ENCODE measurements at regions of chr11 and their contacts with region 1.

Region 1: GRCh38 chr11:61567286-61568061 is 13.4 kb downstream of the SYT7 start:
- DNase-seq: peak; percentile 90
- ATAC-seq: peak; percentile 86
- H3K4me3 Mint-ChIP-seq: peak overlapping the region; percentile 59
- H3K27ac Mint-ChIP-seq: no peak overlapping the region
- H3K4me1 Mint-ChIP-seq: peaks cover 28% of the 10 kb centered on the region
- H3K27me3 Mint-ChIP-seq: peaks cover 19% of the 10 kb centered on the region
- CTCF ChIP-seq: peak; percentile 99

Region 2: DNA sequence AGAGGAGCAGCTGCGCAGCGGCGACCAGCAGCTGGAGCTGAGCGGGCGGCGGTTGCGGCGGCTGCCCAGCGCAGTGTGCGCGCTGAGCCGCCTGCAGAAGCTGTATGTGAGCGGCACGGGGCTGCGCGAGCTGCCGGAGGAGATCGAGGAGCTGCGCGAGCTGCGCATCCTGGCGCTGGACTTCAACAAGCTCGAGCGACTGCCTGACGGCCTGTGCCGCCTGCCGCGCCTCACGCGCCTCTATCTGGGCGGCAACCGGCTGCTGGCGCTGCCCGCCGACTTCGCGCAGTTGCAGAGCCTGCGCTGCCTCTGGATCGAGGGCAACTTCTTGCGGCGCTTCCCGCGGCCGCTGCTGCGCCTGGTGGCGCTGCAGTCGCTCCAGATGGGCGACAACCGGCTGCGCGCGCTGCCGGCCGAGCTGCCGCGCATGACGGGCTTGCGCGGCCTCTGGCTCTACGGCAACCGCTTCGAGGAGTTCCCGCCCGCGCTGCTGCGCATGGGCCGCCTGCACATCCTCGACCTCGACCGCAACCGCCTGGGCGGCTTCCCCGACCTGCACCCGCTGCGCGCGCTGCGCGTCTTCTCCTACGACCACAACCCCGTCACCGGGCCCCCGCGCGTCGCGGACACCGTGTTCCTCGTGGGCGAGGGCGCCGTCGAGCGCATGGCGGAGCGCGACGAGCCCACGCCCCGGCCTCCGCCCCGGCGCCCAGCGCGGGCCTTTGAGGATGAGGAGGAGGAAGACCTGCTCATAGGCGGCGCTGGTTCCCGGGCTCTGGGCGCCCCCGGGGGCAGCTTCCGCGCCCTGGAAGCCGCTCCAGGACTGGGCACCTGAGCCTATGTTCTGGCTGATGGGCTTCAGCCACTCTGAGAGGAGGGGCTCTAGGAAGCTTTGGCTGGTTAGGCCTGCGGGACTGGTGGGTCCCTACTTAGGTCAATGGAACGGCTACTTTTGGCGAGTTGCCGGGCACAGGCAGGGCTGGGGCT is 58.1 kb before region 1 on chr11:
- CTCF ChIA-PET with region 1: interaction called, 19 read pairs
- POLR2A ChIA-PET with region 1: no interaction called
- DNase-seq: peak; percentile 80
- ATAC-seq: peak; percentile 63
- H3K4me3 Mint-ChIP-seq: peak overlapping the region; percentile 48
- H3K27ac Mint-ChIP-seq: no peak overlapping the region
- H3K4me1 Mint-ChIP-seq: peaks cover 58% of the 10 kb centered on the region
- H3K27me3 Mint-ChIP-seq: peaks cover 59% of the 10 kb centered on the region
- CTCF ChIP-seq: no peak

Region 3: DNA sequence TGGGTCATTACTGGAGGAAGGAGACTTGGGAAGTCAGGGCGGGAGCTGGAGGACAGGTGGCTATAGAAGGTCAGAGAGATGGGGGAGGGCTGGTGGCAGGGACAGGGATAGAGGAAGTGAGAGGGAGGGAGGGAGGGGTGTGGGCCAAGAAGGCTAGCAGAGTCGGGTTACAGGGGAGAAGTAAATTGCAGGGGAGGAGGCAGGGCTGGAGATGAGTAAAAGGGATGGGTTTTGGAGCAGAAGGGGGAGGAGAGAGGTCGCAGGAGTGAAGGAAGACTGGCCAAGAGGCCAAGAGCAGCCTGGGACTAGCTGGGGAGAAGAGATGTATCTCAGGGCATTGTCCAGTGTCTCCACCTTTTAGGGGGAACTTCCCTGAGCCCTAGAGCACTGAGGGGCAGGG is 25.9 kb before region 1 on chr11:
- CTCF ChIA-PET with region 1: interaction called, 47 read pairs
- POLR2A ChIA-PET with region 1: no interaction called
- DNase-seq: peak; percentile 54
- ATAC-seq: peak; percentile 85
- H3K4me3 Mint-ChIP-seq: peak overlapping the region; percentile 22; the same call in 1 of the 2 replicates
- H3K27ac Mint-ChIP-seq: peak overlapping the region; percentile 60; the same call in 1 of the 2 replicates
- H3K4me1 Mint-ChIP-seq: peaks cover 47% of the 10 kb centered on the region
- H3K27me3 Mint-ChIP-seq: no peaks in the 10 kb centered on the region; the same call in 1 of the 2 replicates
- CTCF ChIP-seq: no peak

Region 4: DNA sequence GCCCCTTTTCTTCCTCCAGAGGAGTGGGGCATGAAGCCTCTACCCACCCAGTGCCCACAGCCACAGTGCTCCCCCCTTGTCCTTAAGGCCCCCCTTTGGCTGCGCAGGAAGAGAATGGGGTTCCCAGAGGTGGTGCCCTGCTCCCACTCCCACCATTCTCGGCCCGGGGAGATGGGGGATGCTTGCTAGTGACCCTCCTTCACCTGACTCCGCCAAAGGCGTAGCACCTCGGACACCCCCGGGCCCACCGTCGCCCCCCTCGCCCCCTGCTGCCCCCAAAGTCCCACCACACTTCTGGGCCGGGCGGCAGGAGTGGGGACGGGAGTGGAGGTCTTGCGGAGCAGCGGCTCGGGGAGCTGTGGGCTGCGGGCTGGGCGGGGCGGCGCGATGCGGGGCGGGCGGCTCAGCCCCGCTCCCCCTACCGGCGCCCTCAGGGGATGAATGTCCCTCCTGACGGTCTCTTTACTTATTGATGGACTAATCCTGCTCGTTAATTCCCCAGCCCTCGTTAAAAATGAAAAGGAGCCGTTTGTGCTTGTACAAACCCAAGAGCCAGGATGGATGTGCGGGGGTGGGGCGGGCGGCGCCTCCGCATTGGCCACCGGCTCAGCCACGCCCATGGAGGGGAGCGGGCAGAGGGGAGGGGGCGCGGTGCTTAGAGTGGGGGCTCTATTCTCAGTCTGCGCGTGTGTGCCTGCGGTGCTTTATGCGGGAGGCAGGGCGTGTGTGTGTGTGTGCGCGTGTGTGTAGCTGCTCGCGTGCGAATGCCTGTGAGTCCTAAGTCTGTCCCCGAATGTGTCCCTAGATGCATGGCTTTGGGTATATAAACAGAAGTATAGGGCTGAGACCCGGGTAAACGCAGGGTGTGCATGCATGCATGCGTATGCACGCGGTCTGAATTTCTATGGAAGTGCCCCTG is 12.2 kb before region 1 on chr11:
- CTCF ChIA-PET with region 1: interaction called, 58 read pairs
- POLR2A ChIA-PET with region 1: no interaction called
- DNase-seq: peak; percentile 66
- ATAC-seq: peak; percentile 64
- H3K4me3 Mint-ChIP-seq: peak overlapping the region; percentile 70
- H3K27ac Mint-ChIP-seq: no peak overlapping the region
- H3K4me1 Mint-ChIP-seq: peaks cover 39% of the 10 kb centered on the region
- H3K27me3 Mint-ChIP-seq: peaks cover 30% of the 10 kb centered on the region
- CTCF ChIP-seq: peak; percentile 49; the same call in 1 of the 2 replicates

Region 5: GRCh38 chr11:61587521-61588453 is 20.3 kb after region 1 on chr11:
- CTCF ChIA-PET with region 1: interaction called, 66 read pairs
- POLR2A ChIA-PET with region 1: no interaction called
- DNase-seq: peak; percentile 96
- ATAC-seq: peak; percentile 80
- H3K4me3 Mint-ChIP-seq: peak overlapping the region; percentile 74
- H3K27ac Mint-ChIP-seq: no peak overlapping the region
- H3K4me1 Mint-ChIP-seq: peaks cover 34% of the 10 kb centered on the region
- H3K27me3 Mint-ChIP-seq: peaks cover 59% of the 10 kb centered on the region
- CTCF ChIP-seq: no peak

Region 6: DNA sequence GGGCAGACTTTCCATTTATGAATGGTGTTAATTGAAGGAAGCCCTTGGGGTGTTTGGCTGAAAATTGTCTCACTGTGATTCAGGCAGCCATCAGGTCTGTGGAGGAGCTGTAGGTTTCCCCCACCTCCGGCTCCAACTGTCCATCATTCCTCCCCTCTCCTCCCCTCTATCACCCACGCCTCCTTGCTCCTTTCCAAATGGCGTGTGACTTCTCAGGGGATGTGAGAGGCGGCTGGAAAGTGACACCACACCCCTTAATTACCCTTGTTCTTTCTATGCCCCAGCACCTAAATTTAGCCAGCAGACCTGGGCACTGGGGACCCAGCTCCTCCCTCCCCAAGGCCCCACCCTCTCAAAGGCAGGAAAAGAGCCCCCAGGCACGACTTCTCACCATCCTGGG is 51.5 kb after region 1 on chr11:
- CTCF ChIA-PET with region 1: interaction called, 15 read pairs
- POLR2A ChIA-PET with region 1: no interaction called
- DNase-seq: no peak
- ATAC-seq: peak; percentile 57
- H3K4me3 Mint-ChIP-seq: no peak overlapping the region
- H3K27ac Mint-ChIP-seq: no peak overlapping the region
- H3K4me1 Mint-ChIP-seq: peaks cover 23% of the 10 kb centered on the region
- H3K27me3 Mint-ChIP-seq: no peaks in the 10 kb centered on the region; the same call in 1 of the 2 replicates
- CTCF ChIP-seq: no peak

Region 7: DNA sequence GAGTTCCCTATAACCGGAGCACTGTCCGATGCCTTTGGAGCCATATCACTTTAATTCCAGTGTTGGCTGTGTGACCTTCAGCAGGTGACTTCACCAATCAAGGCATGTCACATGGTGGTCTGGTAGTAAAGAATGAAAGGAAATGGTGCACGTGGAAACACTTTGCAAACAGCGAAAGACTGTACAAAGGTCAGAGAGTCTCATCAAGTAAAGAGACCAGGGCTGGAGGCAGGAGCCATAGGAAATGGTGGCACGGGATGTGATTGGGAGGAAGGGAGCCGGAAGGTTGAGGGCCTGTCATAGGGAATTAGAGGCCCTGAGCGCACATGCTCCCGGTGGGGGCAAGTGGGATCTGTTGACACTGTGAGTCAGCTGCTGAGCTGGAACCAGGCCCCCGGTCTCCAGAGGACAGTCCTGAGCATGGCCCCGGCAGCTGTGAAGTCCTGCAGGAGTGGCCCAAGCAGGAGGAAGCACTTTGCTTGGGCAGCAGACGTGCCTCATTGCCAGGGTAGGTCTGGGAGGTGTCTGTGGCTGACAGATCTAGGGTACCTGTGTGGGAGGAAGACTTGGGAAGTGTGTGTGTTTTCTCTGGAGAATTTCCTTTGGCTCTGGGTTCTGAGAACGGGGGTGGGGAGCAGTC is 114.7 kb after region 1 on chr11:
- CTCF ChIA-PET with region 1: no interaction called
- POLR2A ChIA-PET with region 1: no interaction called
- DNase-seq: no peak
- ATAC-seq: no peak
- H3K4me3 Mint-ChIP-seq: no peak overlapping the region
- H3K27ac Mint-ChIP-seq: no peak overlapping the region
- H3K4me1 Mint-ChIP-seq: peaks cover 15% of the 10 kb centered on the region
- H3K27me3 Mint-ChIP-seq: peaks cover 8% of the 10 kb centered on the region
- CTCF ChIP-seq: no peak